ENCODE measurements at regions of chr7 and their contacts with region 1.

Region 1: GRCh38 chr7:55280031-55280454 is 85.1 kb upstream of the LANCL2 start:
- DNase-seq: no peak
- ATAC-seq: peak; percentile 77 to 85
- H3K4me3 ChIP-seq: no peak overlapping the region
- H3K27ac ChIP-seq: no peak overlapping the region
- H3K4me1 ChIP-seq: no peaks in the 10 kb centered on the region
- H3K27me3 ChIP-seq: no peaks in the 10 kb centered on the region
- CTCF ChIP-seq: peak; percentile 60

Region 2: GRCh38 chr7:55173671-55174070 is 106.4 kb before region 1 on chr7:
- intact Hi-C with region 1: no loop called
- DNase-seq: no peak
- ATAC-seq: no peak
- H3K4me3 ChIP-seq: no peak overlapping the region
- H3K27ac ChIP-seq: no peak overlapping the region
- H3K4me1 ChIP-seq: no peaks in the 10 kb centered on the region
- H3K27me3 ChIP-seq: no peaks in the 10 kb centered on the region
- CTCF ChIP-seq: no peak

Region 3: DNA sequence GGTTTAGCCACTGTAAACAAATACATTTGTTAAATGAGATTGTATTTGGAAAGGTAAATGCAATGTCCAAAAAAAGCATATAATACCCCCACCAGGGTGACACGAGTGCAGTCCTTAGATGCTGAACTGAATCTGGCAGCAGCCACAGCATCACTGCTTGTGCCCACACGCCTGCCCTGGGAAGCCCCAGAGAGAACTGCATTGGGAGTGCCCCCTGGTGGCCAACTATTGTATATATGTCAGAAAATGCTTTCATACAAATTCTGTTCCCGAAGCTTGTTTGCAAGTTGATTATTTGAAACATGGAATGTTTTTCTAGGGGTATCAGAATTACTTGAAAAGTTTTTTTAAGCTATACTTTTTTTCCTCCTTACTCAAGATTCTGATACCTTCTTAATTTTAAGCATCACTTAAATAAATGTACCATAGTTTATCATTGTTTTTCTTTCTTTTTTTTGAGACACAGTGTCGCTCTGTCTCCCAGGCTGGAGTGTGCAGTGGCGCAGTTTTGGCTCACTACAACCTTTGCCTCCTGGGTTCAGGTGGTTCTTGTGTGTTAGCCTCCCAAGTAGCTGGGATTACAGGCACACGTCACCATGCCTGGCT is 135.2 kb after region 1 on chr7:
- intact Hi-C with region 1: loop called (anchors 10 kb)
- DNase-seq: peak; percentile 79
- ATAC-seq: peak; percentile 90 to 92
- H3K4me3 ChIP-seq: no peak overlapping the region
- H3K27ac ChIP-seq: no peak overlapping the region
- H3K4me1 ChIP-seq: no peaks in the 10 kb centered on the region
- H3K27me3 ChIP-seq: no peaks in the 10 kb centered on the region
- CTCF ChIP-seq: peak; percentile 82

Region 4: GRCh38 chr7:56009695-56010094 is 729.7 kb after region 1 on chr7:
- intact Hi-C with region 1: no loop called
- DNase-seq: no peak
- ATAC-seq: no peak
- H3K4me3 ChIP-seq: no peak overlapping the region
- H3K27ac ChIP-seq: no peak overlapping the region
- H3K4me1 ChIP-seq: no peaks in the 10 kb centered on the region
- H3K27me3 ChIP-seq: no peaks in the 10 kb centered on the region
- CTCF ChIP-seq: no peak